HAP-1 (cell line): ENCODE measurements at regions of chr7 and their contacts with region 1.

Region 1: GRCh38 chr7:149662591-149663095 is 110.7 kb downstream of the ZNF467 start:
- DNase-seq: peak; percentile 90 to 95
- H3K4me3 ChIP-seq: no peak overlapping the region
- H3K4me1 ChIP-seq: 0 out of 2 replicates have a peak, but pooled peaks cover 2% of the 10 kb centered on the region
- H3K27me3 ChIP-seq: peaks cover 7% of the 10 kb centered on the region; the same call in 1 of the 2 replicates

Region 2: GRCh38 chr7:149209518-149210269 is 452.9 kb before region 1 on chr7:
- in situ Hi-C with region 1: no loop called
- DNase-seq: peak; percentile 50 to 77
- H3K4me3 ChIP-seq: no peak overlapping the region
- H3K4me1 ChIP-seq: no peaks in the 10 kb centered on the region
- H3K27me3 ChIP-seq: no peaks in the 10 kb centered on the region

Region 3: DNA sequence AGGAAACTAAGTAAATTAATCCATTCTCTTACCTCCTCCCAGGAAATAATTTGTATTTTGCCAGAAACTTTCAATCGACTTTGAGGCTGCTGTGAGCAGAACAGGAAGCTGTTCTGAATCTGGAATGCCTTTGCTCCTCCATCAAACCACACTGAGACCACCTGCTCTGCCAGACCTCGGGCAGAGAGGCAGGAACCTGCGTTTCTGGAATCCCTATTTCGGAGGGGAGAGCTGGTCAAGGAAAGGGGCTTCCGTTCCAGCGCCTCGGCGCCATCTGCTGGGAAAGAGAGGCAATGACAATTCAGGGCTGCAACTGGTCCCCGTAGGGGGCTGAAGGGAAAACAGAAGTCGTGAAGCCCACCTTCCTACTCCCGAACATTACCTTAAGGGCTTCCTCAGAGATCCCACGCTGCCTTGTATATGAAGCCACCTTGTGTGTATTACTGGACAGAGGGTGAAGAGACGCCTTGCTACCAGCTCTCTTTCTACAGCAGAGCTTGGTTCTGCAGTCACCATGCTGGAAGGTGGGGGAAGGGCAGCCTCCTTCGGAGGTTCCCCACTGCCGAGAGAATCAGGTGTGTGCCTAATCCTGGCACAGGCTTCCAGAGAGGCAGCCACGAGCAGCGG is 79.5 kb after region 1 on chr7:
- in situ Hi-C with region 1: loop called (anchors 5 kb)
- DNase-seq: peak; percentile 58 to 86
- H3K4me3 ChIP-seq: peak overlapping the region; percentile 27
- H3K4me1 ChIP-seq: peaks cover 8% of the 10 kb centered on the region
- H3K27me3 ChIP-seq: no peaks in the 10 kb centered on the region

Region 4: GRCh38 chr7:150489782-150490181 is 827.1 kb after region 1 on chr7:
- in situ Hi-C with region 1: no loop called
- DNase-seq: no peak
- H3K4me3 ChIP-seq: no peak overlapping the region
- H3K4me1 ChIP-seq: no peaks in the 10 kb centered on the region
- H3K27me3 ChIP-seq: no peaks in the 10 kb centered on the region